ENCODE measurements at regions of chr10 and their contacts with region 1.

Region 1: DNA sequence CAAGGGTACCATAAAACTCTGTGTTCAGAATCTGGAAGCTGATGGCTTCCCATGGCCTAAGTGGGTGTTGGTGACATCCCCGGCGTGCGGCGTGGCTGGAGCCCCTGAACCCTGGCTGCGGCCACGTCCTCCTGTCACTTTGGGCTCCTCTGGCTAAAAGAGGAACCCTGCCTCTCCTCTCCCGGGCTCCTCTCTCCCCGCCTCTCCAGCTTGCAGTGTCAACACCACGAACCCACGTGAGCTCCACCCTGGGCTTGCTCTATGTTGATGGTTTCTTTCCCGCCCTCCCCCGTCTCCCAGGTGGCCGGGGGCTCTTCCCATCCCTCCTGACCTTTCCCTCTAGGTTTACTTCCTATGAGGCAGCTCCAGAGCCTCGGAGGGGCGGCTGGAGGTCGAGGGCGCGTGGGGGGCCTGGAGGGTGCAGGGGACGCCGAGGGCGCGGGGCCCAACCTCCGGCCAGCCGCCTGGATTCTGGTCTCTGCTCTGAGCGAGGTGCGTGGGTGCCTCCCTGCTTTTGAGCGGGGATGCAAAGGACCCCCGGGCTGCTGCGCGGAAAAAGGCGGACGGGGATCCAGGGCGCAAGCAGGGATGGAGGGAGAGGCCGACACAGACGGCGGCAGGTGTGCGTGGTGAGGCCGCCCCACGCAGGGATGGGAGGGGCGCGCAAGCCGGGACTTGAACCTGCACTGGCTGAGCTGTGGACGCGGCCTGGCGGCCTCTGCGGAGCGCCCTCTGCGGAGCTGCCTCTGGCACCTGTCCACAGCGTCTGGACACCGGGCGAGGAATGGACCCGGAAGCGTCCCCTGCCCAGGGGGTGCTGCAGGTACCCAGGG is 115.5 kb upstream of the DIP2C start:
- DNase-seq: no peak
- H3K4me3 ChIP-seq: no peak overlapping the region
- H3K27ac ChIP-seq: no peak overlapping the region
- H3K4me1 ChIP-seq: no peaks in the 10 kb centered on the region
- H3K27me3 ChIP-seq: no peaks in the 10 kb centered on the region
- CTCF ChIP-seq: no peak

Region 2: GRCh38 chr10:775245-776075 is 29.5 kb before region 1 on chr10:
- CTCF ChIA-PET with region 1: no interaction called
- dilution Hi-C with region 1: no loop called
- in situ Hi-C with region 1: no loop called
- intact Hi-C with region 1: no loop called
- DNase-seq: no peak
- H3K4me3 ChIP-seq: no peak overlapping the region
- H3K27ac ChIP-seq: no peak overlapping the region
- H3K4me1 ChIP-seq: no peaks in the 10 kb centered on the region
- H3K27me3 ChIP-seq: no peaks in the 10 kb centered on the region
- CTCF ChIP-seq: no peak

Region 3: DNA sequence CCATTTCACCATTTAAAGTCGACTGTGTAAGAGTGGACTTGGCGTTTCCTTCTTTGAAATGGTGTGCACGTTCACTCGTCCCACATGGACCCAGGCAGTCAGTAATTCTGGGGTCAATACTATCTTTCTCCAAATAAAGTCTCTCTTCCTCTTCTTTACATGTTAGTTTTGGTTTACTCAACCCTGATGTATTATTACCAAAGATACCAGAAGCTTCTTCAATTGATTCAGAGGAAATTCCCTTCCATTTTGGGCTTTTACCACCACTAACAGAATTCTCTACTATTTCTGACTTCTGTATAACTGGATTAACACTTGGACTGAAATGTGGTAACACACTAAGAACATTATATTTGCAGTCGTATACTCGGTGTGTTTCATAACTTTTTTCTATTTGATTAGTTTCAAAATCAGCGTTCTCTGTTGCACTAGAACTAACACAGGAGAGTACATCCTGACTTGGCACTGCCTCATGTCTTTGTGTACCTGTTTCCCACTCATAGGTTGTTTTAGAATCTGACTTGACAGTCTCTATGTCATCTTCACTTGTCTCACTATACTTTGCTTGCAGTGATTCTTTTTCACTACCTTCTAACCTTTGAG is 65.7 kb after region 1 on chr10:
- CTCF ChIA-PET with region 1: no interaction called
- dilution Hi-C with region 1: loop called (anchors 5 kb)
- in situ Hi-C with region 1: no loop called
- intact Hi-C with region 1: no loop called
- DNase-seq: no peak
- H3K4me3 ChIP-seq: no peak overlapping the region
- H3K27ac ChIP-seq: no peak overlapping the region
- H3K4me1 ChIP-seq: no peaks in the 10 kb centered on the region
- H3K27me3 ChIP-seq: no peaks in the 10 kb centered on the region
- CTCF ChIP-seq: no peak

Measured in mammary epithelial cell (primary cell).